ENCODE measurements at regions of chr19 and their contacts with region 1.

Region 1: GRCh38 chr19:9435279-9436268 is at the start of gene ZNF266:
- DNase-seq: peak; percentile 88 to 89
- H3K4me3 ChIP-seq: peak within 1 kb of the TSS; percentile 62
- H3K4me3 Mint-ChIP-seq: peak within 1 kb of the TSS; percentile 86
- H3K27ac Mint-ChIP-seq: peak within 1 kb of the TSS; percentile 96
- H3K4me1 ChIP-seq: no peaks in the 10 kb centered on the region
- H3K4me1 Mint-ChIP-seq: peaks cover 8% of the 10 kb centered on the region
- H3K27me3 ChIP-seq: no peaks in the 10 kb centered on the region
- H3K27me3 Mint-ChIP-seq: no peaks in the 10 kb centered on the region
- CTCF ChIP-seq: peak; percentile 59 to 70
- total RNA-seq, gene ZNF266: 18.5 and 20.4 TPM in 2 replicates

Region 2: GRCh38 chr19:9205501-9206113 is 230.0 kb before region 1 on chr19:
- CTCF ChIA-PET with region 1: no interaction called
- POLR2A ChIA-PET with region 1: no interaction called
- intact Hi-C with region 1: loop called (anchors 10 kb)
- DNase-seq: peak; percentile 50 to 68
- H3K4me3 ChIP-seq: no peak overlapping the region
- H3K4me3 Mint-ChIP-seq: no peak overlapping the region
- H3K27ac Mint-ChIP-seq: no peak overlapping the region
- H3K4me1 ChIP-seq: no peaks in the 10 kb centered on the region
- H3K4me1 Mint-ChIP-seq: no peaks in the 10 kb centered on the region
- H3K27me3 ChIP-seq: no peaks in the 10 kb centered on the region
- H3K27me3 Mint-ChIP-seq: peaks cover 4% of the 10 kb centered on the region
- CTCF ChIP-seq: peak; percentile 64 to 78

Region 3: DNA sequence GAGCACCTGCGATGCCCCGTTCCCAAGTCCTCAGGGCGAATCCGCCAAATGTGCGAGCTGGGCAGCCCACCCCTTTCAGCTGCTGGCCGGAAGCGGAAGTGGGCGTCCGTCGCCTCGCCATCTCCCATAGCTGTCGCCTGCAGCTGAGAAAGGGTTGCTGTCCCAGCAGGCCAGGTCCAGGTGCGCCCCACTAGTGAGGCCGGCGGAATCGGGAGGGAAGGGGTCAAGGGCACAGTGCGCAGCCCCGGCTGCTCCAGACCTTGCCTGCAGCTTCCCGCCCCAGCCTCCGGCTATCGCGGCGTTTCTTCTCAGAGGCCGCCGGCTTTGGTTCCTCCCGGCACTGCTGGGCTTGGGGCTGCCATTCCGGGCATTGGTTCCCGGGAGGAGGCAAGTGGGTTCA is 72.7 kb before region 1 on chr19 and contains the start of gene ZNF177:
- CTCF ChIA-PET with region 1: no interaction called
- POLR2A ChIA-PET with region 1: no interaction called
- intact Hi-C with region 1: no loop called
- DNase-seq: no peak
- H3K4me3 ChIP-seq: no peak within 1 kb of the TSS
- H3K4me3 Mint-ChIP-seq: no peak within 1 kb of the TSS
- H3K27ac Mint-ChIP-seq: no peak within 1 kb of the TSS
- H3K4me1 ChIP-seq: no peaks in the 10 kb centered on the region
- H3K4me1 Mint-ChIP-seq: no peaks in the 10 kb centered on the region
- H3K27me3 ChIP-seq: no peaks in the 10 kb centered on the region
- H3K27me3 Mint-ChIP-seq: no peaks in the 10 kb centered on the region
- CTCF ChIP-seq: no peak
- total RNA-seq, gene ZNF177: 0.34 and 0.70 TPM in 2 replicates

Region 4: DNA sequence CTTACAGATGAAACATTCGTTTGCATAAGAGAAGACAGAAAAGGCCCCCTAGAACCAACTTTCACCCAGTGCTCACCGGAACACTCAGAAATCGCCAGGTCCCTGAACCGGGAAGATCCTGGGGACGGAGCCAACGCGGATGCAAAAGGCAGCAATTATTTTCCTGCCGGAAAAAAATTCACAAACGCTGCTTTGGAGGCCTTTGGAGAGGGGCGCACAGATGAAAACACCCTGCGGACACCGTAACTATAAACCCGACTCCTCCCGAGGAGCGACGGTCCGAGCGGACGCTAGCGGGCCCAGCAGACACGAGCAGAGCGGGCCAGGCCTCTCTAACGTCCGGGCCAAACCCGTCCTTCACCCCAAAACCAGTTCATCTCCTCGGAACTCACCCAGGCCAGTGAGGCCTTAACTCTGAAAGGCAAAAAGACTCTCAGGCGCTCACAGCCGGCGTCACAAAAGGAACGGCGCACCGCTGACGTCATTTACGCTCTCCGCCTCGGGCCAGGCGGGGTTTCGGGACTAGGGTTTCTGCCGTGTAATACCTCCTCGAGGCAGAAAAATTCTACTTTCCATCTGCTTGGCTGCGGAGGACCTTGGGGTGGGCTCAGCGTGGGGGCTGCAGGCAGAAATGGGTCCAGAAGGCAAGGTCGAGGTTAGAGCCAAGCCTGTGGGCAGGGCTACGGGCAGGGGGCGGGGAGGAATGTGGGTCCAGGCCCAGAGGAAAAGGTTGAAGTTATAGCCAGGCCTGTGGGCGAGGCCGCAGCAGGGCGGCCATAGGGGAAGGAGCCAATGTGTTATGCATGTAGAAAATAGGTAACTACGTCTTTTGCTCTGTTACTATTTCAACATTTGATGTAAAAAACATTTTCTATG is 102.8 kb after region 1 on chr19 and contains the start of gene ZNF426:
- CTCF ChIA-PET with region 1: no interaction called
- POLR2A ChIA-PET with region 1: no interaction called
- intact Hi-C with region 1: loop called (anchors 10 kb)
- DNase-seq: peak; percentile 76 to 77
- H3K4me3 ChIP-seq: peak within 1 kb of the TSS; percentile 57
- H3K4me3 Mint-ChIP-seq: peak within 1 kb of the TSS; percentile 84
- H3K27ac Mint-ChIP-seq: peak within 1 kb of the TSS; percentile 97
- H3K4me1 ChIP-seq: no peaks in the 10 kb centered on the region
- H3K4me1 Mint-ChIP-seq: no peaks in the 10 kb centered on the region
- H3K27me3 ChIP-seq: no peaks in the 10 kb centered on the region
- H3K27me3 Mint-ChIP-seq: no peaks in the 10 kb centered on the region
- CTCF ChIP-seq: no peak
- total RNA-seq, gene ZNF426: 4.6 and 6.6 TPM in 2 replicates